ENCODE measurements at regions of chr1 and their contacts with region 1.

Region 1: GRCh38 chr1:28199328-28200233 is 23.1 kb upstream of the PTAFR start:
- DNase-seq: peak; percentile 89
- H3K4me3 Mint-ChIP-seq: peak overlapping the region; percentile 28
- H3K27ac Mint-ChIP-seq: peak overlapping the region; percentile 87
- H3K4me1 Mint-ChIP-seq: peaks cover 41% of the 10 kb centered on the region
- H3K27me3 Mint-ChIP-seq: no peaks in the 10 kb centered on the region

Region 2: GRCh38 chr1:28056129-28056925 is 143.3 kb before region 1 on chr1:
- CTCF ChIA-PET with region 1: no interaction called
- POLR2A ChIA-PET with region 1: no interaction called
- intact Hi-C with region 1: loop called (anchors 1 kb)
- DNase-seq: peak; percentile 87
- H3K4me3 Mint-ChIP-seq: peak overlapping the region; percentile 21
- H3K27ac Mint-ChIP-seq: peak overlapping the region; percentile 64
- H3K4me1 Mint-ChIP-seq: peaks cover 42% of the 10 kb centered on the region
- H3K27me3 Mint-ChIP-seq: no peaks in the 10 kb centered on the region

Region 3: GRCh38 chr1:28144203-28145135 is 55.1 kb before region 1 on chr1:
- CTCF ChIA-PET with region 1: interaction called, 9 read pairs
- POLR2A ChIA-PET with region 1: interaction called, 4 read pairs
- intact Hi-C with region 1: loop called (anchors 1 kb)
- DNase-seq: peak; percentile 68
- H3K4me3 Mint-ChIP-seq: no peak overlapping the region
- H3K27ac Mint-ChIP-seq: no peak overlapping the region
- H3K4me1 Mint-ChIP-seq: peaks cover 18% of the 10 kb centered on the region
- H3K27me3 Mint-ChIP-seq: peaks cover 7% of the 10 kb centered on the region

Region 4: DNA sequence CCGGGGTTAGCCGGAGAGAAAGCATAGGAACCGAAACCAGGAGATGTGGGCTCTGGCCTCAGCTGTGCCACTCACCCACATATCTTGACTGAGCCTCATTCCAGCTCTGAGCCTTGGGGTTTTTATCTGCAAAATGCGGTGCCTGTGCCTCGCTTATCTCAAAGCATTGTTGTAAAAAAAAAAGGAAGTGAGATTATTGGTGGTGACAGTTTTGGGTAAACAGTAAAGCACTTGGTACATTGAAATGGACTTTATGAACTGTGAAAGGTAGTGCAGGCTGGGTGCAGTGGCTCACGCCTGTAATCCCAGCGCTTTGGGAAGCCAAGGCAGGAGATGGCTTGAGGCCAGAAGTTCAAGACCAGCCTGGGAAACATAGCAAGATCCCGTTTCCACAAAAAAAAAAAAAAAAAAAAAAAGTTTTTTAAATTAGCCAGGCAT is 26.8 kb before region 1 on chr1:
- CTCF ChIA-PET with region 1: interaction called, 5 read pairs
- POLR2A ChIA-PET with region 1: interaction called, 12 read pairs
- intact Hi-C with region 1: loop called (anchors 1 kb)
- DNase-seq: peak; percentile 58
- H3K4me3 Mint-ChIP-seq: no peak overlapping the region
- H3K27ac Mint-ChIP-seq: no peak overlapping the region
- H3K4me1 Mint-ChIP-seq: peaks cover 41% of the 10 kb centered on the region
- H3K27me3 Mint-ChIP-seq: peaks cover 29% of the 10 kb centered on the region

Region 5: DNA sequence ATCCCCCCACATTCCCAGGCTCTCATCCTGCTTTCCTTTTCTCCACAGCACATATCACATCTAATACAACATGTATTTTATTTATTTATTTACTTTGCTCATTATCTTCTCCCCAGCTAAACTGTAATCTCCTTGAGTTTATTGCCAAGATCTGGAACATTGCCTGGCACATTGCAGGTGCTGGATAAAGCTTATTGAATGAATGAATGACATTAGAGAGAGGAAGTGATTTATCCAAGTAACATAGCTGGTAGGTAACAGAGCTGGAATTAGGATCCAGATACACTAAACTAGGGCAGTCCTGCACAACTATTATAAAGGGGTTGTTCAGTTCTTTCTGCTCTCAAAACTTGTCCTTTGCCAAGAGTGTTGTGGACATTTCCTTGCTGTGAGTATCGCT is 14.5 kb before region 1 on chr1:
- CTCF ChIA-PET with region 1: no interaction called
- POLR2A ChIA-PET with region 1: no interaction called
- intact Hi-C with region 1: no loop called
- DNase-seq: no peak
- H3K4me3 Mint-ChIP-seq: no peak overlapping the region
- H3K27ac Mint-ChIP-seq: no peak overlapping the region
- H3K4me1 Mint-ChIP-seq: peaks cover 6% of the 10 kb centered on the region
- H3K27me3 Mint-ChIP-seq: peaks cover 6% of the 10 kb centered on the region

Measured in activated CD4-positive, alpha-beta memory T cell treated with anti-CD3 and anti-CD28 coated beads for 36 hours (primary cell).